Activated CD8-positive, alpha-beta T cell treated with anti-CD3 and anti-CD28 coated beads, Interleukin-2, amount 10 ng/mL, durations not matched to agents 7 days and 5 days (primary cell): ENCODE measurements at regions of chr6 and their contacts with region 1.

Region 1: GRCh38 chr6:26122793-26123674 is 35.8 kb downstream of the HFE start:
- DNase-seq: peak; percentile 98
- ATAC-seq: peak; percentile 50
- H3K4me3 Mint-ChIP-seq: peak overlapping the region; percentile 95
- H3K27ac Mint-ChIP-seq: peak overlapping the region; percentile 100
- H3K4me1 Mint-ChIP-seq: peaks cover 44% of the 10 kb centered on the region
- H3K27me3 Mint-ChIP-seq: peaks cover 1% of the 10 kb centered on the region

Region 2: GRCh38 chr6:26020329-26021000 is 102.6 kb before region 1 on chr6:
- CTCF ChIA-PET with region 1: no interaction called
- POLR2A ChIA-PET with region 1: interaction called, 351 read pairs
- DNase-seq: peak; percentile 88
- ATAC-seq: peak; percentile 51
- H3K4me3 Mint-ChIP-seq: peak overlapping the region; percentile 96
- H3K27ac Mint-ChIP-seq: peak overlapping the region; percentile 100
- H3K4me1 Mint-ChIP-seq: peaks cover 65% of the 10 kb centered on the region
- H3K27me3 Mint-ChIP-seq: no peaks in the 10 kb centered on the region

Region 3: DNA sequence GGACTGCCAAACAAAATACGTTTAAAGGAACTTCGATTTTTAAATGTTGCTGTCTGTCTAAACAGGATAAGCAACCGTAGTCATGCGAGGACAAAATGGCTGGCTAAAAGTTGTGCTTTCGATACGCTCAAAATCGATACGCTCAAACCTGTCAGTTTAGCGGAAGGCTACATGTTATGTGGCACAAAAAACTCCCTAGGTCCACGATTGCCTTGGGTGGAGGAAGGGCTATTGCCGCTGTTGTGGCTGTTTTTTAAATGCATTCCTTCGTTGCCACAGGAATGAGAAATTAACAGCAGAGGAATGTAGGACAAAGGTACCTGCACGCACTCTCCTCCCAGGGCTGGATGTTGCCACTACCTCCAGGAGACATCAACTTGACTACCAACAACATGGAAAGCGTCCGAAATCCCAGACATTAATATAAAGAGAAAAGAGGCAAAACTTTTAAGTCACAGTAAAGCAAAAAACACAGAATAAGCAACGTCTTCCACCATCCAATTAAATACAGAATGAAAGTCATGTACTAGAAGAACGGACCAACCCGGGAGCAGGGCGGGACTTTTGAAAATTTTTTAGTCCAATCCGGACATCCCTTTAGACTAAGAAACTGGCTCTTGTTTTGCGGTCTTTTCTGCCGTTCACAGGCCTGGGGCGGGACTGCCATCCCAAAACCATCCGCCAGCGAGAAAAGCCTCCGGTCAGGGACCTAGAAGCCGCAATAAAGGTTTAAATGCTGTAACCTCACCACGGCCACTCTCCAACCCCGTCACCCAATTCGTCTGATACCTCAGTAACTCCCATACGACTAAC is 68.0 kb before region 1 on chr6:
- CTCF ChIA-PET with region 1: no interaction called
- POLR2A ChIA-PET with region 1: interaction called, 361 read pairs
- DNase-seq: peak; percentile 95
- ATAC-seq: peak; percentile 72
- H3K4me3 Mint-ChIP-seq: peak overlapping the region; percentile 87
- H3K27ac Mint-ChIP-seq: peak overlapping the region; percentile 100
- H3K4me1 Mint-ChIP-seq: peaks cover 36% of the 10 kb centered on the region
- H3K27me3 Mint-ChIP-seq: no peaks in the 10 kb centered on the region

Region 4: DNA sequence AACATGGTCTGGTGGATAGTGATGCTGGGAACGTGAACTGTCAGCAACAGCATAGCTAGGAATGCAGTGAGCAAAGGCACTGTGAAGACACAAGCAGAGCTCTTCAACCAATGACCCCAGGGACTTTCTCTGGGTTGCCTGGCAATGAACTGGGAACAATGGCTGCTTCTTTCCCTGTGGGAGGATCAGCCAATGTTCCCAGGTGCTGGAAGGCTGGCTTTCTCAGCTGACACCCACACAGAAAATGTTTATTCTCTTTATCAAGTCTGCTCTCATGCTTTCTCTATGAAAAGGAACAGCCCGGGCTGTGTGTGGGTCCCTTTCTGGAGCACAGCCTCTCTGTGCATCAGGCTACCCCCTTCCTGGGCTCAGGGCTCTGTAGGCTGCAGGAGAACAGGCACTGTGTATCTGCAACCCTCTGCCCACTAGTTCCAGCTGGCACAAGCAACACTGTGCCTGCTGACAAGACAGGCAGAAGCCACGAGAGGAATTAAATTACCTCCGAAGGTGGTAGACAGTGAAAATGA is 18.4 kb after region 1 on chr6:
- CTCF ChIA-PET with region 1: no interaction called
- POLR2A ChIA-PET with region 1: interaction called, 100 read pairs
- DNase-seq: no peak
- ATAC-seq: no peak
- H3K4me3 Mint-ChIP-seq: no peak overlapping the region
- H3K27ac Mint-ChIP-seq: no peak overlapping the region
- H3K4me1 Mint-ChIP-seq: peaks cover 5% of the 10 kb centered on the region
- H3K27me3 Mint-ChIP-seq: no peaks in the 10 kb centered on the region

Region 5: GRCh38 chr6:26204332-26205165 is 81.5 kb after region 1 on chr6:
- CTCF ChIA-PET with region 1: no interaction called
- POLR2A ChIA-PET with region 1: interaction called, 1,039 read pairs
- DNase-seq: peak; percentile 95
- ATAC-seq: peak; percentile 66
- H3K4me3 Mint-ChIP-seq: no peak overlapping the region
- H3K27ac Mint-ChIP-seq: no peak overlapping the region
- H3K4me1 Mint-ChIP-seq: peaks cover 41% of the 10 kb centered on the region
- H3K27me3 Mint-ChIP-seq: no peaks in the 10 kb centered on the region

Region 6: GRCh38 chr6:26240154-26241032 is 117.4 kb after region 1 on chr6:
- CTCF ChIA-PET with region 1: no interaction called
- POLR2A ChIA-PET with region 1: interaction called, 160 read pairs
- DNase-seq: peak; percentile 94
- ATAC-seq: peak; percentile 81
- H3K4me3 Mint-ChIP-seq: peak overlapping the region; percentile 74
- H3K27ac Mint-ChIP-seq: peak overlapping the region; percentile 96
- H3K4me1 Mint-ChIP-seq: peaks cover 51% of the 10 kb centered on the region
- H3K27me3 Mint-ChIP-seq: peaks cover 2% of the 10 kb centered on the region

Region 7: DNA sequence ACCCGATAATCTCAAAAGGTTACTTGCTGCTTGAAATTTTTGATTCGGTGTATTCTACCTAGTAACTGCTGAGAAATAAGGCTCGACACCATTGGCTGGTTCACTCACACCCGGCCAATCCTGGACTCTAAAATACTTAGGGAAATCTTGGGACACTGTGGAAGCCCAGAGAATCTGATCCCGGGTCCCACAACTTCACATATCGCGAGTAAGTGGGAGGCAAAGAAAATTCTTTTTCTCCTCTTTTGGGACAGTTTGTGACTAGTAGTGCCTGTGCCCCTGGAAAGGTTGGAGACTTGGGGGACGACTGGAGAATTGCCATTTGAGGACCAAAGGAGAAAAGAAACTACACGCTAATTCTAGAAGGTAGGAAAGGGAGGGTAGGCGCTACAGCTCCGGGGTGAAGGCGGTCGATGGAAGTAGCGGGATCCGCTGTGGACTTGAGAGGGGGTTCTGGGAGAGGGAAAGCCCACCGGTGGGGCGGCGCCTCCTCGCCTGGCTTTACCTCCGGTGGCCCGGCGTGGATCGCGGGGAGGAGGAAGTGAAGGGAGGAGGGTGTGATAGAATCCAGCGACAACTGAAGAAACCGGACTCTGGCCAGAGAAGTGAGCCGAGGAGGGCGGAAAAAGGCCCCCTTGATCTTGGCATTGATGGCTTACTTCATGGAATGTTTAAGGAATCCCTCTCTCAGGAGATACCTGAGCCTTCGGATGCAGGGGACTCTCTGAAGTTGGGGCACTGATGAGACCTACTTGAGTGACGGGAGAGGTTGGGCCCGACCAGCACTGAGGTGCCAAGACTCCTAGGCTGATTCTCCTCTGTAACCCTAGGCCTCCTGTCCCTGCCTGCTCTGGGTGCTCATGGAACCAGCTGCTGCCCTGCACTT is 298.5 kb after region 1 on chr6:
- CTCF ChIA-PET with region 1: no interaction called
- POLR2A ChIA-PET with region 1: no interaction called
- DNase-seq: peak; percentile 68
- ATAC-seq: peak; percentile 97
- H3K4me3 Mint-ChIP-seq: no peak overlapping the region
- H3K27ac Mint-ChIP-seq: no peak overlapping the region
- H3K4me1 Mint-ChIP-seq: peaks cover 22% of the 10 kb centered on the region
- H3K27me3 Mint-ChIP-seq: no peaks in the 10 kb centered on the region

Region 8: GRCh38 chr6:27146706-27147505 is 1023.9 kb after region 1 on chr6:
- CTCF ChIA-PET with region 1: no interaction called
- POLR2A ChIA-PET with region 1: interaction called, 28 read pairs
- DNase-seq: peak; percentile 91
- ATAC-seq: peak; percentile 64
- H3K4me3 Mint-ChIP-seq: no peak overlapping the region
- H3K27ac Mint-ChIP-seq: no peak overlapping the region
- H3K4me1 Mint-ChIP-seq: peaks cover 35% of the 10 kb centered on the region
- H3K27me3 Mint-ChIP-seq: no peaks in the 10 kb centered on the region